PC-9 (cell line): ENCODE measurements at regions of chr10 and their contacts with region 1.

Region 1: GRCh38 chr10:132571650-132572535 is 34.3 kb downstream of the INPP5A start:
- DNase-seq: peak; percentile 85 to 90
- H3K4me3 ChIP-seq: no peak overlapping the region; the same call in 1 of the 2 replicates
- H3K27ac ChIP-seq: peak overlapping the region; percentile 55
- H3K4me1 ChIP-seq: peaks cover 55% of the 10 kb centered on the region
- H3K27me3 ChIP-seq: no peaks in the 10 kb centered on the region
- CTCF ChIP-seq: no peak

Region 2: GRCh38 chr10:132458593-132459300 is 113.1 kb before region 1 on chr10:
- CTCF ChIA-PET with region 1: no interaction called
- POLR2A ChIA-PET with region 1: no interaction called
- intact Hi-C with region 1: loop called (anchors 1 kb)
- DNase-seq: peak in 1 of 2 experiments; percentile 48
- H3K4me3 ChIP-seq: no peak overlapping the region
- H3K27ac ChIP-seq: no peak overlapping the region
- H3K4me1 ChIP-seq: no peaks in the 10 kb centered on the region
- H3K27me3 ChIP-seq: no peaks in the 10 kb centered on the region
- CTCF ChIP-seq: peak; percentile 90

Region 3: DNA sequence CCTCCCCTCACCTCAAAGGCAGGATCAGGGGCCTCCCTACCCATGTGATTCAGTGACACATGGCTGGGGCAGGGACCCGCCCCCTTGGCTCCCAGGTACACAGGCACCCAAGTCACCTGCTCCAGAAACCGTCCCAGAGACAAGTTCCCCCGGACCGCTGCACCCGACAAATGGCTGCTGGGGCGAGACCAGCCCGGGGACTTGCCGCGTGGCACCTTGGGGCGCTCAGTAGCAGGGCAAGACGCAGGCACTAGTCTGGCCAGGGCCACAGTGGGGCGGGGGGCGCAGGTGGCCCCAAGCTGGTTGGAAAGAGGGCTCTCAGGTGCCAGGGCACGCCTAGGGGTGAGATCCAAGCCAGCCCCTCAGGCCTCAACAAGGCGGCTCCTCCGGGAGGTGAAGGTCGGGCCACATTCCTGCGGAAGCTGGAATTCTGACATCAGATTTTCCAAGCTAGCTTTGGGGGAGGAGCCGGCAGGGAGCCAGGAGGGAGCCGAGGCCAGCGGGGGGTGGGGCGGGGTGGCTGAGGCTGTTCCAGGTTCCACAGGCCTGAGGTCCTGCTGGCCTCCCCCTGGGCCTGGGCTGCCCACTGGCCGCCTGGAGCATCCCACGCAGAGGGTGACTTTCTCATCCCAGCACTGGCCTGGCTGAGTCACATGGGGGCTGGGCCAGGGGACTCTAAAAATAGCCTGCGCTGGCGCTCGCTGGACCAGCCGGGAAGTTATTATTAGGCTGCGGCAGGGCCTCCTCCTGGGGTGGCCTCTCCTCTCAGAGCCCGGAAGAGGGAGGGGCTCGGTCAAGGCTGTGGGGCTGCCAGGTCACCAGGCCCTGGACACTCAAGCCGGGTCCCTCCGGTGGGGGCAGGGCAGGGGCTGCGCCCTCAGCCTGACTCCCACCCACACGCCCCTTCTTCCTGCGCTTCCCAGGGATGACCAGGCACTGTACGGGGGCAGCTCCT is 54.8 kb before region 1 on chr10:
- CTCF ChIA-PET with region 1: no interaction called
- POLR2A ChIA-PET with region 1: no interaction called
- intact Hi-C with region 1: loop called (anchors 1 kb)
- DNase-seq: peak; percentile 79 to 86
- H3K4me3 ChIP-seq: peak overlapping the region; percentile 30; the same call in 1 of the 2 replicates
- H3K27ac ChIP-seq: peak overlapping the region; percentile 78
- H3K4me1 ChIP-seq: peaks cover 26% of the 10 kb centered on the region
- H3K27me3 ChIP-seq: no peaks in the 10 kb centered on the region
- CTCF ChIP-seq: no peak

Region 4: DNA sequence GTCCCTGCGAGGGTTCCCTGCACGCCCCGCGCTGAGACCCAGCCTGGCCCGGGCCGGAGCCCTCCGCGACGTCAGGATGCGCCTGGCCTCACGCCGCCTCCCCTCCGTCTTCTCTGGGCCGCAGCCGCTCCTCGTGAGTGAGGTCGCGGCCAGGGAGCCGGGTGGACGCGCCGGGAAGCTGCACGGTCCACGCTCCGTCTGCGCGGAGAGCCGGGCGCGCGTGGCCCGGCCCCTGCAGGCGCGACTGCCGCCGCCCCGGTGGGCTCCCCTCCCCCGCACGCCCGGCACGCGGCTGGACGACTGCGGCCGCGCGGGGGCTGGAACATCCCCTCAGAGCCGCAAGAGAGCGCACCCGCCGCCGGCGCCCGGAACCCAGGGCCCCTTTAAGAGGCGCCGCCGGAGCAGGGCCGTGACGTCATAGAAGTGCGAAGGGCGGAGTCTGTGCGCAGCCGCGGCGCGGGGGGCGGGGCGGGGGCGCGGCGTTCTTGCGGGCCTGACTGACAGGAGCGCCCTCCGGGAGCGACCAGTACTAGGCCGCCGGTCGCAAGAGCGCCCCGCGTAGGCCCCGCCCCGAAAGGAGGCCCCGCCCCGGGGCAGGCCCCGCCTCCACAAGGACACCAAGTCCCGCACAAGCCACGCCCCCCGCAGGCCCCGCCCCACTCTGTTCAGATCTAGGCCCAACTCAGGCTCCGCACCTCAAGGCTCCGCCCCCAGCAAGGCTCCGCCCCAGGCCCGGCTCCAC is 34.8 kb before region 1 on chr10:
- CTCF ChIA-PET with region 1: no interaction called
- POLR2A ChIA-PET with region 1: no interaction called
- intact Hi-C with region 1: loop called (anchors 1 kb)
- DNase-seq: peak; percentile 91 to 99
- H3K4me3 ChIP-seq: peak overlapping the region; percentile 72
- H3K27ac ChIP-seq: no peak overlapping the region
- H3K4me1 ChIP-seq: peaks cover 39% of the 10 kb centered on the region
- H3K27me3 ChIP-seq: no peaks in the 10 kb centered on the region
- CTCF ChIP-seq: no peak

Region 5: GRCh38 chr10:132593389-132593788 is 21.5 kb after region 1 on chr10:
- CTCF ChIA-PET with region 1: no interaction called
- POLR2A ChIA-PET with region 1: no interaction called
- intact Hi-C with region 1: loop called (anchors 1 kb)
- DNase-seq: no peak
- H3K4me3 ChIP-seq: no peak overlapping the region
- H3K27ac ChIP-seq: no peak overlapping the region
- H3K4me1 ChIP-seq: peaks cover 26% of the 10 kb centered on the region
- H3K27me3 ChIP-seq: no peaks in the 10 kb centered on the region
- CTCF ChIP-seq: no peak

Region 6: DNA sequence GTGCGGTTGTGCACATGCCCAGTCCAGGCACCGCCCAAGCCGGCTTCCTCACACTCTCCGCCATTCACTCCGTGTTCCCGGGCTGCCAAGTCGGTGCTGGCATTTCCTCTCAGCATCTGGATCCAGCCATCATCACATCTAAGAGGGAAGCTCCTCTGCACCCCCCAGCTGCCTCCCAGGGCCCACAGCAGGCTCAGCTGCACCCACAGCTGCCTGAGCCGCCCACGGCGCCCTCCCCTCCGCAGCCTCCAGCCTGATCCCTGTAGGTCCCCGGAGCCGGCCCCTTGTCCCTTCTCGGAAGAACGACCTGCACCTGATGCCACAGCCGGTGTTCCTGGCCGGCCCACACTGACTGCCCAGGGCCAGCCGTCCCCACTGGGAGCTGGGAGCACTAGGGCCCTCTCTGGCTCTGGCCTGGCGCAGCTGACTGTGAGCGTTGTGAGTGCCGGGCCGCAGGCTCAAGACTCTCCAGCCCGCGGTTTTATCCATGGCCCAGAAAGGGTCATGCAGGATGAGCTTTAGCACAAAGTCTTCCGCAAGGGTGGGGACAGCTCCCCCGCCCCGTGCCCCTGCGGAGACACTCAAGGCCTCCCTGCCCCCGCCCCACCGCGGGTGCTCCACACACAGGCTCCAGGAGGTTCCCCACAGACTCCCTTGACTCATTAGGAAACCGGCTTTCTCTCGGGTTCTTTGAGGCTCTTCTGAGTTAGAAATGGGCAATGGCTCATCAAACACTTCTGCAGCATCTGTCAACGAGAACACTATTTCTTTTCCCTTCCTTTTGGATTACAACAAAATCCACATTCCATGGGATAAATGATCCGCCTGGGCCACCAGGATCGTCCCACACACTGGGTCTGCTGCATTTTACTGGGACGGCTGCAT is 339.2 kb after region 1 on chr10:
- CTCF ChIA-PET with region 1: no interaction called
- POLR2A ChIA-PET with region 1: no interaction called
- intact Hi-C with region 1: no loop called
- DNase-seq: no peak
- H3K4me3 ChIP-seq: no peak overlapping the region
- H3K27ac ChIP-seq: no peak overlapping the region
- H3K4me1 ChIP-seq: no peaks in the 10 kb centered on the region
- H3K27me3 ChIP-seq: peaks cover 7% of the 10 kb centered on the region; the same call in 1 of the 2 replicates
- CTCF ChIP-seq: no peak